Calu3 (cell line): ENCODE measurements at regions of chr18 and their contacts with region 1.

Region 1: GRCh38 chr18:46660955-46661749 is 4.1 kb upstream of the LOXHD1 start:
- DNase-seq: peak; percentile 17
- H3K4me3 Mint-ChIP-seq: no peak overlapping the region
- H3K27ac Mint-ChIP-seq: no peak overlapping the region
- H3K4me1 Mint-ChIP-seq: no peaks in the 10 kb centered on the region
- H3K27me3 Mint-ChIP-seq: peaks cover 84% of the 10 kb centered on the region
- CTCF ChIP-seq: no peak

Region 2: DNA sequence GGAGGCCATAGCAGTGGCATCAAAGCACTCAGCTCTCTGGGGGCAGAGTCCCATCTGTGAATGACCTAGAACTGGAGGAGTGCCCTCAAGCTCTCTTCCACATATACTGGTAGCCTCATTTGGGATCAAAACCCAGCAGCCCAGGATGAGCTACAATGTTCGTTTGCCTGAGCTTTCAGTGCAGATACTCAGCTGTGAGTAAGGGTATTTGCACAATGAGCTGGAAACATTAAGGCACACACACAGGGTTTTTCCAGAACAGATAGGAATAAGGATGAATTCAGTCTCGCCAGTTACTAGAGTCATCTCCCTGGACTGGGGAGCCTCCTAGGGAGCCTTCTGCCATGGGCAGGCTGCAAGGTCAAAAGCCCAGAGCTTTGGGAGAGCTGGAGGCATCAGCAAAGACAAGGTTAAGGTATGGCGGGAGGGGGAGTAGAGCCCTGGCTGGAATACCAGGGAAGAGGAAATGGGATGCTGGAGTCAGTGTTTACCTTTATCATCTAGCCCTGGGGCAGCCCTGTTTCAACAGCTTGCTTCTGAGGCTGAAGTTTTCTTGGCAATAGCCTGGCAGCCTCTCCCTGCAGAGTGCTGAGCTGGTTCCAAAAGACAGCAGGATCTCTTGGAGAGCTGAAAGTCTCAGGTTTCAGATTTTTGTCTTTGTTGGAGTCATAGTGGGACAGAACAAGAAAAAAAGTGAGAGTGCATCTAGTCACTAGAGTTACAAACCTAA is 191.8 kb before region 1 on chr18:
- CTCF ChIA-PET with region 1: no interaction called
- intact Hi-C with region 1: no loop called
- DNase-seq: no peak
- H3K4me3 Mint-ChIP-seq: no peak overlapping the region
- H3K27ac Mint-ChIP-seq: no peak overlapping the region
- H3K4me1 Mint-ChIP-seq: no peaks in the 10 kb centered on the region
- H3K27me3 Mint-ChIP-seq: peaks cover 85% of the 10 kb centered on the region
- CTCF ChIP-seq: no peak

Region 3: GRCh38 chr18:46481048-46481846 is 179.9 kb before region 1 on chr18:
- CTCF ChIA-PET with region 1: no interaction called
- intact Hi-C with region 1: loop called (anchors 10 kb)
- DNase-seq: peak; percentile 72
- H3K4me3 Mint-ChIP-seq: no peak overlapping the region
- H3K27ac Mint-ChIP-seq: no peak overlapping the region
- H3K4me1 Mint-ChIP-seq: no peaks in the 10 kb centered on the region
- H3K27me3 Mint-ChIP-seq: peaks cover 29% of the 10 kb centered on the region
- CTCF ChIP-seq: peak; percentile 60